ENCODE measurements at regions of chr11 and their contacts with region 1.

Region 1: DNA sequence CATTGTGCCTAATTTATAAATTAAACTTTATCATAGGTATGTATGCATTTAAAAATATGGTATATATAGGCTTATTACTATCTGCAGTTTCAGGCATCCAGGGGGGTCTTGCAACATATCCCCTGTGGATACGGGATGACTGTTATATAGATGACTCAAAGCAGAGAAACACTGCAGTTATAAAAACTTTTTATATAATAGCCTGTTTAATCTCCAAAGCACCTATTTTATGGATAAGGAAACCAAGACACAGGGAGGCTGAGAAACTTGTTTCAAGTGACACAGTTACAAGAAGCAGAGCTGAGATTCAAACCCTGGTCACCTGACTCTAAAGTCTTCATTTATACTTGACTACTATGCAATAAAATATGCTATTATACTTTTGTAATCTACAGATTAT is 897.7 kb downstream of the KCNA4 start:
- DNase-seq: no peak
- ATAC-seq: no peak
- H3K4me3 ChIP-seq: no peak overlapping the region
- H3K27ac ChIP-seq: no peak overlapping the region
- H3K4me1 ChIP-seq: no peaks in the 10 kb centered on the region
- H3K27me3 ChIP-seq: no peaks in the 10 kb centered on the region
- CTCF ChIP-seq: no peak
- POLR2A ChIP-seq: no peak
- RAD21 ChIP-seq: no peak

Region 2: GRCh38 chr11:28505210-28505609 is 613.9 kb before region 1 on chr11:
- CTCF ChIA-PET with region 1: no interaction called
- POLR2A ChIA-PET with region 1: no interaction called
- RAD21 ChIA-PET with region 1: no interaction called
- intact Hi-C with region 1: no loop called
- DNase-seq: no peak
- ATAC-seq: no peak
- H3K4me3 ChIP-seq: no peak overlapping the region
- H3K27ac ChIP-seq: no peak overlapping the region
- H3K4me1 ChIP-seq: no peaks in the 10 kb centered on the region
- H3K27me3 ChIP-seq: no peaks in the 10 kb centered on the region
- CTCF ChIP-seq: no peak
- POLR2A ChIP-seq: no peak
- RAD21 ChIP-seq: no peak

Region 3: DNA sequence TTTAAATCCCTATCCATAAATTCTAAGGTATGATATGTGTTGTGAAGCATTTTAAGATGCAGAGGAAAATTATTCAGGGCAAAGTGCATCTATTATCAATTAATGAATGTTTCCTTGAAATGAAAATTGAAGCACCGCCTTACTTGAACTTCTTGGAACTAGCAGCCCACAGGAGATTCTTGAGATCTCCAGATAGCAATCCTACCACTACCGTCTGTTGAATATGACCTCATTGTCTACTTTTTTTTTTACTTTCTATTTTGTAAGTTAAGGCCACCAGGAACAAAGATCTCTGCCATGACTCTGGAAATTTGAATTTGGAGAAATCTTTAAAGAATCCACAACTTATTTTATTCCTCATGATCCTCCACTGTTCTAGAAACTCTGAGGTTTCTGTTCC is 89.0 kb after region 1 on chr11:
- CTCF ChIA-PET with region 1: no interaction called
- POLR2A ChIA-PET with region 1: no interaction called
- RAD21 ChIA-PET with region 1: no interaction called
- intact Hi-C with region 1: loop called (anchors 5 kb)
- DNase-seq: no peak
- ATAC-seq: no peak
- H3K4me3 ChIP-seq: no peak overlapping the region
- H3K27ac ChIP-seq: no peak overlapping the region
- H3K4me1 ChIP-seq: no peaks in the 10 kb centered on the region
- H3K27me3 ChIP-seq: no peaks in the 10 kb centered on the region
- CTCF ChIP-seq: no peak
- POLR2A ChIP-seq: no peak
- RAD21 ChIP-seq: no peak

Region 4: GRCh38 chr11:29562183-29562582 is 443.1 kb after region 1 on chr11:
- CTCF ChIA-PET with region 1: no interaction called
- POLR2A ChIA-PET with region 1: no interaction called
- RAD21 ChIA-PET with region 1: no interaction called
- intact Hi-C with region 1: no loop called
- DNase-seq: no peak
- ATAC-seq: no peak
- H3K4me3 ChIP-seq: no peak overlapping the region
- H3K27ac ChIP-seq: no peak overlapping the region
- H3K4me1 ChIP-seq: no peaks in the 10 kb centered on the region
- H3K27me3 ChIP-seq: no peaks in the 10 kb centered on the region
- CTCF ChIP-seq: no peak
- POLR2A ChIP-seq: no peak
- RAD21 ChIP-seq: no peak

Measured in HCT116 (cell line).